HCT116 (cell line): ENCODE measurements at regions of chr1 and their contacts with region 1.

Region 1: GRCh38 chr1:227318003-227318852 is at the start of gene CDC42BPA:
- DNase-seq: peak; percentile 57
- ATAC-seq: peak; percentile 82
- H3K4me3 ChIP-seq: peak within 1 kb of the TSS; percentile 75
- H3K27ac ChIP-seq: peak within 1 kb of the TSS; percentile 83
- H3K4me1 ChIP-seq: peaks cover 7 to 36% of the 10 kb centered on the region in 2 experiments
- H3K27me3 ChIP-seq: no peaks in the 10 kb centered on the region
- CTCF ChIP-seq: no peak
- POLR2A ChIP-seq: peak; percentile 48
- RAD21 ChIP-seq: no peak
- total RNA-seq, gene CDC42BPA: 44.0 TPM

Region 2: DNA sequence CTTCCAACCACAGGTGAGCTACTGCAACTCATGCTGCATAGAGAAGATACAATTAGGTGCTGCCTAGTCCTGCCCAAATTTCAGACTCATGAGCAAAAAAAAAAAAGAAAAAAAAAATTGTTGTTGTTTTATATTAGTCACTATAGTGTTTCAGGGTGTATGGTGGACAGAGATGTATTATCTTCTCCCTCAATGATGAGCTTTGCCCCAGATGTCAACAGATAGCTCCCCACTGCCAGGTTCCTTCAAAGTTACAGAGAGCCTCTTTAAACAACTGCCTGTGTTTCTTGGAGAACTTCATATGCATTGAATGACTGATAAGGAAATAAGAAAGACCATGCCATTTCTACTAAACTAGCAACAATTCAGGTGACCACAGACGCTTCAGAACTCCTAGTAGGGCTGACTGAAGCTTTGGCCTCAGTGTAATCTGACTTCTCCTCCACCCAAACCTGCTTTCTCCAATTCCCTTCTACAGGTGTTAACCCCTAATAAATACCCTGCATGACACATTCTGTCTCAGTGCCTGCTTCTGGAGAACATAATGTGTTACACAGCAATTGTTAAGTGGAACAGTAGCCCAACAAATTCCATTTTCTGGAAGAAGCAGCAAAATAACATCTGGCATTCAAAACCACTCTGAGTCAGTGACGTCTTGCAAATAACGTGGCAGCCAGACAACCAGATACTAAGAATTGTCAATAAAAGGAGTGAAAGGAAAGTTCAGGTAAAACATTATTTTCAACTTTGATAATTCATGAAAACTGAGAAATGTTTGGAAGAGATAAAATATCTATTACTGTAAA is 147.7 kb before region 1 on chr1:
- CTCF ChIA-PET with region 1: no interaction called
- POLR2A ChIA-PET with region 1: no interaction called
- RAD21 ChIA-PET with region 1: no interaction called
- intact Hi-C with region 1: no loop called
- DNase-seq: no peak
- ATAC-seq: no peak
- H3K4me3 ChIP-seq: no peak overlapping the region
- H3K27ac ChIP-seq: no peak overlapping the region
- H3K4me1 ChIP-seq: no peaks in the 10 kb centered on the region
- H3K27me3 ChIP-seq: no peaks in the 10 kb centered on the region
- CTCF ChIP-seq: no peak
- POLR2A ChIP-seq: no peak
- RAD21 ChIP-seq: no peak

Region 3: GRCh38 chr1:227234998-227235405 is 83.2 kb before region 1 on chr1:
- CTCF ChIA-PET with region 1: no interaction called
- POLR2A ChIA-PET with region 1: no interaction called
- RAD21 ChIA-PET with region 1: no interaction called
- intact Hi-C with region 1: loop called (anchors 5 kb)
- DNase-seq: peak; percentile 63
- ATAC-seq: peak; percentile 95
- H3K4me3 ChIP-seq: no peak overlapping the region
- H3K27ac ChIP-seq: no peak overlapping the region
- H3K4me1 ChIP-seq: peaks cover 0 to 17% of the 10 kb centered on the region in 2 experiments; a peak in 1 of 4 replicates
- H3K27me3 ChIP-seq: no peaks in the 10 kb centered on the region
- CTCF ChIP-seq: peak; percentile 52 to 72 (median 56)
- POLR2A ChIP-seq: no peak
- RAD21 ChIP-seq: peak; percentile 68

Region 4: DNA sequence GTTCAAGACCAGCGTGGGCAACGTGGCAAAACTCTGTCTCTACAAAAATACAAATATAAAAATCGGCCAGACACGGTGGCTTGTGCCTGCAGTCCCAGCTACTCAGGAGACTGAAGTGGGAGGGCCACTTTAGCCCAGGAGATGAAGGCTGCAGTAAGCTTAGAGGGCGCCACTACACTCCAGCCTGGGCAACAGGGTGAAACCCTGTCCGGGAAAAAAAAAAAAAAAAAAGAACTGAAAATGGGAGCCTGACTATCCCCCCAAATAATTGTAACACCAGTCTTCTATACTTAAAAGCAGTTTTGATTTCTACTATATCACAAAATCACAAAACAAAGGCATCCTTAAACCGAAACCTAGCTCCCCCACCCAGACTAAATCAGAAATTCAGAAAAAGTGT is 60.3 kb before region 1 on chr1:
- CTCF ChIA-PET with region 1: no interaction called
- POLR2A ChIA-PET with region 1: no interaction called
- RAD21 ChIA-PET with region 1: no interaction called
- intact Hi-C with region 1: loop called (anchors 5 kb)
- DNase-seq: no peak
- ATAC-seq: peak; percentile 97
- H3K4me3 ChIP-seq: no peak overlapping the region
- H3K27ac ChIP-seq: no peak overlapping the region
- H3K4me1 ChIP-seq: peaks cover 7 to 17% of the 10 kb centered on the region in 2 experiments
- H3K27me3 ChIP-seq: no peaks in the 10 kb centered on the region
- CTCF ChIP-seq: peak in 2 of 3 experiments; percentile 46 to 56; a peak in 4 of 6 replicates
- POLR2A ChIP-seq: no peak
- RAD21 ChIP-seq: no peak

Region 5: GRCh38 chr1:227357171-227357880 is 39.1 kb after region 1 on chr1:
- CTCF ChIA-PET with region 1: no interaction called
- POLR2A ChIA-PET with region 1: interaction called, 3 read pairs
- RAD21 ChIA-PET with region 1: no interaction called
- intact Hi-C with region 1: loop called (anchors 5 kb)
- DNase-seq: peak; percentile 68
- ATAC-seq: peak; percentile 82
- H3K4me3 ChIP-seq: peak overlapping the region; percentile 15 to 47
- H3K27ac ChIP-seq: peak overlapping the region; percentile 68
- H3K4me1 ChIP-seq: peaks cover 21 to 26% of the 10 kb centered on the region in 2 experiments
- H3K27me3 ChIP-seq: no peaks in the 10 kb centered on the region
- CTCF ChIP-seq: no peak
- POLR2A ChIP-seq: no peak
- RAD21 ChIP-seq: no peak

Region 6: GRCh38 chr1:227429447-227430359 is 111.5 kb after region 1 on chr1:
- CTCF ChIA-PET with region 1: no interaction called
- POLR2A ChIA-PET with region 1: no interaction called
- RAD21 ChIA-PET with region 1: no interaction called
- intact Hi-C with region 1: loop called (anchors 5 kb)
- DNase-seq: no peak
- ATAC-seq: no peak
- H3K4me3 ChIP-seq: no peak overlapping the region
- H3K27ac ChIP-seq: no peak overlapping the region
- H3K4me1 ChIP-seq: peaks cover 0 to 36% of the 10 kb centered on the region in 2 experiments; a peak in 3 of 4 replicates
- H3K27me3 ChIP-seq: no peaks in the 10 kb centered on the region
- CTCF ChIP-seq: no peak
- POLR2A ChIP-seq: no peak
- RAD21 ChIP-seq: no peak